HCT116 (cell line): ENCODE measurements at regions of chr22 and their contacts with region 1.

Region 1: GRCh38 chr22:38051900-38052862 is 5.0 kb upstream of the PICK1 start:
- DNase-seq: peak; percentile 63
- ATAC-seq: peak; percentile 81
- H3K4me3 ChIP-seq: no peak overlapping the region
- H3K27ac ChIP-seq: no peak overlapping the region; the same call in 1 of the 2 replicates
- H3K4me1 ChIP-seq: peaks cover 0 to 10% of the 10 kb centered on the region in 2 experiments; a peak in 2 of 4 replicates
- H3K27me3 ChIP-seq: no peaks in the 10 kb centered on the region
- CTCF ChIP-seq: peak; percentile 79 to 99 (median 94)
- POLR2A ChIP-seq: no peak
- RAD21 ChIP-seq: peak; percentile 99

Region 2: GRCh38 chr22:37508431-37508992 is 543.7 kb before region 1 on chr22:
- CTCF ChIA-PET with region 1: no interaction called
- POLR2A ChIA-PET with region 1: no interaction called
- RAD21 ChIA-PET with region 1: no interaction called
- intact Hi-C with region 1: no loop called
- DNase-seq: no peak
- ATAC-seq: no peak
- H3K4me3 ChIP-seq: no peak overlapping the region
- H3K27ac ChIP-seq: no peak overlapping the region
- H3K4me1 ChIP-seq: peaks cover 28 to 44% of the 10 kb centered on the region in 2 experiments
- H3K27me3 ChIP-seq: no peaks in the 10 kb centered on the region
- CTCF ChIP-seq: no peak
- POLR2A ChIP-seq: no peak
- RAD21 ChIP-seq: no peak

Region 3: DNA sequence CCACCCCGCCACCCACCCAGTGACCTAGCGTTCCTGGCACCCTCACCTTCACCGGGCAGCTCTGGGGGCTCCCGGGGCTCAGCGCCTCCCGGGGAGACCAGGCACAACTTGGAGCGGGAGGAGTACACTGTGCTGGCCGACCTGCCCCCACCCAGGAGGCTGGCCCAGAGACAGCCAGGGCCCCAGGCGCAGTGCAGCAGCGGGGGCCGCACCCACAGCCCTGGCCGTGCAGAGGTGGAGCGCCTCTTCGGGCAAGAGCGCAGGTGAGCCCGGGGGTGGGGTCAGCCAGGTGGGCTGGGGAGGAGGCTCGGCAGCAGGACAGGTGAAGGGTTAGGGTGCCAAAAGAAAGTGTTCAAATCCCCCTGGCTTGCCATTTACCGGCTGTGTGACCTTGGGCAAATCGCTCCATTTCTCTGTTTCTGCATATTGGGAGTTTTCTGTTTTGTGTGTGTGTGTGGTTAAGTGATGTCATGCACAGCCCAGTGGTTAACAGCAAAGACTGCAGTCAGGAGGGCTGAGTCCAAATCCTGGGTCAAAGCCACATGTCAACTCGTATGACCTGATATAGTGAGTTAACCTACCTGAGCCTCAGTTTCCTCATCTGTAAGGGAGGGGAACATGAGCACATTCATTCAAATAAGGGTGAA is 325.8 kb before region 1 on chr22:
- CTCF ChIA-PET with region 1: no interaction called
- POLR2A ChIA-PET with region 1: no interaction called
- RAD21 ChIA-PET with region 1: no interaction called
- intact Hi-C with region 1: no loop called
- DNase-seq: no peak
- ATAC-seq: peak; percentile 60
- H3K4me3 ChIP-seq: no peak overlapping the region
- H3K27ac ChIP-seq: no peak overlapping the region
- H3K4me1 ChIP-seq: 0 out of 4 replicates have a peak, but pooled peaks cover 0 to 3% of the 10 kb centered on the region in 2 experiments
- H3K27me3 ChIP-seq: no peaks in the 10 kb centered on the region
- CTCF ChIP-seq: 0 out of 6 replicates have a peak, but pooled peaks of 1 of the 3 experiments have one; percentile 14
- POLR2A ChIP-seq: no peak
- RAD21 ChIP-seq: peak; percentile 43; the same call in 1 of the 2 replicates

Region 4: DNA sequence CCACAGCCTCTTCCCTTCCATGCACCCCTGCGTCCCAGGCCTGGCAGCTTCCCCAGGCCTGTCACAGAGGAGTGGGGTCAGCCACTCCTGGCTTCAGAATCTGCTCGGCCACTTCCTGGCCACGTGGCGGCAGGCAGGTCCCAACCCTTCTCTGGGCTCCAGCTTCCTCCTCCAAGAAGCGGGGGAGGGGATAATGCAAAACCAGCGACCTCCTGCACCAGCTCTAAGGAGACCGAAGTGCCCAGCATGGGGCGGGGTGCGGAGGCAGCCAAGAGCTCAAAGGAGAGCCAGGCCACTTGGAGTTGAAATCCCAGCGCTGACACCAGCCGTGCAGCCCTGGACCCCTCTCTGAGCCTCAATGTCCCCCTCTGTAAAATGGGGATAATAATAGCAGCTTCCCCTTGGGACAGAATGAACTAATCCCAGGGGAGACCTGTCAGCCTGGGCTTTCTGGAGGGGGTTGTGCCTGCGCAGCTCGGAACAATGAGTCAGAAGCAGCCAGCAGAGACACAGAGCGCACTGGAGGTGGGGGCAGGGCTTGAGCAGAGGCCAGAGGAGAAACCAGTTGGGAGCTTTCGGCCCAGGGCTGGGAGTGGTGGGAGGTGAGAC is 17.8 kb before region 1 on chr22:
- CTCF ChIA-PET with region 1: interaction called, 26 read pairs
- POLR2A ChIA-PET with region 1: interaction called, 4 read pairs
- RAD21 ChIA-PET with region 1: interaction called, 10 to 11 read pairs
- intact Hi-C with region 1: no loop called
- DNase-seq: peak; percentile 68
- ATAC-seq: peak; percentile 93
- H3K4me3 ChIP-seq: peak overlapping the region; percentile 26 to 47
- H3K27ac ChIP-seq: peak overlapping the region; percentile 90
- H3K4me1 ChIP-seq: peaks cover 23 to 33% of the 10 kb centered on the region in 2 experiments
- H3K27me3 ChIP-seq: no peaks in the 10 kb centered on the region
- CTCF ChIP-seq: no peak
- POLR2A ChIP-seq: no peak
- RAD21 ChIP-seq: peak; percentile 31

Region 5: GRCh38 chr22:38104084-38104483 is 51.9 kb after region 1 on chr22:
- CTCF ChIA-PET with region 1: interaction called, 37 read pairs
- POLR2A ChIA-PET with region 1: interaction called, 5 read pairs
- RAD21 ChIA-PET with region 1: interaction called, 4 to 6 read pairs
- intact Hi-C with region 1: loop called (anchors 5 kb)
- DNase-seq: peak; percentile 8
- ATAC-seq: peak; percentile 75
- H3K4me3 ChIP-seq: no peak overlapping the region
- H3K27ac ChIP-seq: no peak overlapping the region
- H3K4me1 ChIP-seq: peaks cover 3 to 13% of the 10 kb centered on the region in 2 experiments; a peak in 3 of 4 replicates
- H3K27me3 ChIP-seq: no peaks in the 10 kb centered on the region
- CTCF ChIP-seq: peak; percentile 42 to 66 (median 64); a peak in 5 of 6 replicates
- POLR2A ChIP-seq: no peak
- RAD21 ChIP-seq: peak; percentile 43

Region 6: DNA sequence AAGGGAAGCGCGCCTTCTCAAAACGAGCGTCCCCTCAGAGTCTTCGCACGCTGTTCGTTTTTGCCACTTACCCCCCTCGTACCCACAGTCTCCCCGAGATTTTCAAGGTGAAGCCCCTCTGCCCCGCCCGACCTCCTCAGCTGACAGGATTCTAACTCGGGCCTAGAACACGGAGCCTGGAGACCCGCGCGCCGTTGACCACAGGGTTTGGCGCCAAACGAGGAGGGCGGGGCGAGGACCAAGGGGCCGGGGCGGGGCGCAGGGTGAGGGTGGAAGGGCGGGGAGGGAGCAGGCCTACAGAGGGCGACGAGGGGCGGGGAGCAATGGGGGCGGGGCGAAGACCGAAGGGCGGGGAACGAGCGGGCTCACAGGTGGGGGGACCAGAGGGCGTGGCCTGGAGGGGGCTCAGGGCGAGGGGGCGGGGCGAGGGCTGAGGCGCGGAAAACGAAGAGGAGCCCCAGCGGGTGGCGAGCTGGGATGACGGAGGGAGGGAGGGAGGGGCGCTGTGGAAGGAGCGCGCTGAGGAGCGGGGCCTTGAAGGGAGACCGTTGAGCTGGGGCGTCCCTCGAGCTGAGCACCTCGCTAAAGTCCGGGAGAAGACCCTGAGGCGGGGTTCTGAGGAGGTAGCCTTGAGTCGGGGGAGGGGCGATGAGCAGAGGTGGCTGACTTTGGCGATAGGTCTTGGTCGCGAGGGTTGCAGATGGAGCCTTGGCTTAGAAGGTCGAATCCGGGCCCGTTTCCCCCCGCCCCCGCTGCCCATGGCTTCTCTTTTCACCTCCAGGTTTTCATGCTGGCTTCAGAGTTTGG is 518.0 kb after region 1 on chr22 and contains the start of gene DMC1:
- CTCF ChIA-PET with region 1: interaction called, 8 read pairs
- POLR2A ChIA-PET with region 1: no interaction called
- RAD21 ChIA-PET with region 1: no interaction called
- intact Hi-C with region 1: loop called (anchors 2 kb)
- DNase-seq: peak; percentile 79
- ATAC-seq: peak; percentile 90
- H3K4me3 ChIP-seq: peak within 1 kb of the TSS; percentile 53 to 58
- H3K27ac ChIP-seq: peak within 1 kb of the TSS; percentile 53
- H3K4me1 ChIP-seq: peaks cover 8 to 20% of the 10 kb centered on the region in 2 experiments; a peak in 3 of 4 replicates
- H3K27me3 ChIP-seq: no peaks in the 10 kb centered on the region
- CTCF ChIP-seq: no peak
- POLR2A ChIP-seq: no peak
- RAD21 ChIP-seq: no peak
- total RNA-seq, gene DMC1: 0.89 TPM

Region 7: GRCh38 chr22:38724926-38725571 is 672.9 kb after region 1 on chr22:
- CTCF ChIA-PET with region 1: interaction called, 11 read pairs
- POLR2A ChIA-PET with region 1: no interaction called
- RAD21 ChIA-PET with region 1: no interaction called
- intact Hi-C with region 1: no loop called
- DNase-seq: no peak
- ATAC-seq: peak; percentile 89
- H3K4me3 ChIP-seq: no peak overlapping the region
- H3K27ac ChIP-seq: no peak overlapping the region
- H3K4me1 ChIP-seq: no peaks in the 10 kb centered on the region
- H3K27me3 ChIP-seq: no peaks in the 10 kb centered on the region
- CTCF ChIP-seq: peak in 2 of 3 experiments; percentile 70 to 74; a peak in 4 of 6 replicates
- POLR2A ChIP-seq: no peak
- RAD21 ChIP-seq: peak; percentile 24; the same call in 1 of the 2 replicates